PC-9 (cell line): ENCODE measurements at regions of chr17 and their contacts with region 1.

Region 1: GRCh38 chr17:41322094-41322902 is 6.8 kb upstream of the KRTAP17-1 start:
- DNase-seq: peak in 1 of 2 experiments; percentile 22
- H3K4me3 ChIP-seq: no peak overlapping the region
- H3K27ac ChIP-seq: no peak overlapping the region
- H3K4me1 ChIP-seq: no peaks in the 10 kb centered on the region
- H3K27me3 ChIP-seq: no peaks in the 10 kb centered on the region
- CTCF ChIP-seq: peak; percentile 80

Region 2: GRCh38 chr17:40615295-40615988 is 706.9 kb before region 1 on chr17:
- CTCF ChIA-PET with region 1: no interaction called
- POLR2A ChIA-PET with region 1: no interaction called
- intact Hi-C with region 1: loop called (anchors 10 kb)
- DNase-seq: peak; percentile 72
- H3K4me3 ChIP-seq: no peak overlapping the region
- H3K27ac ChIP-seq: no peak overlapping the region
- H3K4me1 ChIP-seq: peaks cover 10% of the 10 kb centered on the region
- H3K27me3 ChIP-seq: no peaks in the 10 kb centered on the region
- CTCF ChIP-seq: peak; percentile 73

Region 3: GRCh38 chr17:40803617-40804082 is 518.6 kb before region 1 on chr17:
- CTCF ChIA-PET with region 1: no interaction called
- POLR2A ChIA-PET with region 1: no interaction called
- intact Hi-C with region 1: loop called (anchors 2 kb)
- DNase-seq: peak; percentile 74 to 82
- H3K4me3 ChIP-seq: no peak overlapping the region
- H3K27ac ChIP-seq: 0 out of 2 replicates have a peak overlapping the region, but pooled peaks have one; percentile 18
- H3K4me1 ChIP-seq: peaks cover 9% of the 10 kb centered on the region
- H3K27me3 ChIP-seq: no peaks in the 10 kb centered on the region
- CTCF ChIP-seq: peak; percentile 94

Region 4: GRCh38 chr17:41060052-41060604 is 262.2 kb before region 1 on chr17 and contains the start of gene KRTAP2-3:
- CTCF ChIA-PET with region 1: no interaction called
- POLR2A ChIA-PET with region 1: no interaction called
- intact Hi-C with region 1: loop called (anchors 5 kb)
- DNase-seq: peak; percentile 64 to 93
- H3K4me3 ChIP-seq: no peak within 1 kb of the TSS
- H3K27ac ChIP-seq: peak within 1 kb of the TSS; percentile 88
- H3K4me1 ChIP-seq: peaks cover 47% of the 10 kb centered on the region
- H3K27me3 ChIP-seq: no peaks in the 10 kb centered on the region
- CTCF ChIP-seq: no peak
- total RNA-seq, gene KRTAP2-3: 0.57 TPM in 1 of 2 replicates, not detected in the other

Region 5: GRCh38 chr17:41308251-41308917 is 13.9 kb before region 1 on chr17:
- CTCF ChIA-PET with region 1: no interaction called
- POLR2A ChIA-PET with region 1: no interaction called
- intact Hi-C with region 1: no loop called
- DNase-seq: no peak
- H3K4me3 ChIP-seq: no peak overlapping the region
- H3K27ac ChIP-seq: no peak overlapping the region
- H3K4me1 ChIP-seq: no peaks in the 10 kb centered on the region
- H3K27me3 ChIP-seq: no peaks in the 10 kb centered on the region
- CTCF ChIP-seq: no peak

Region 6: GRCh38 chr17:41496820-41497408 is 174.6 kb after region 1 on chr17:
- CTCF ChIA-PET with region 1: interaction called, 6 read pairs
- POLR2A ChIA-PET with region 1: no interaction called
- intact Hi-C with region 1: loop called (anchors 1 kb)
- DNase-seq: peak; percentile 82 to 87
- H3K4me3 ChIP-seq: no peak overlapping the region
- H3K27ac ChIP-seq: no peak overlapping the region; the same call in 1 of the 2 replicates
- H3K4me1 ChIP-seq: peaks cover 83% of the 10 kb centered on the region
- H3K27me3 ChIP-seq: no peaks in the 10 kb centered on the region
- CTCF ChIP-seq: peak; percentile 86